Activated CD4-positive, alpha-beta memory T cell treated with anti-CD3 and anti-CD28 coated beads, Interleukin-2, amount 10 ng/mL, durations not matched to agents 7 days and 5 days (primary cell): ENCODE measurements at regions of chrX and their contacts with region 1.

Region 1: GRCh38 chrX:154002215-154002719 is 17.4 kb downstream of the IRAK1 start:
- DNase-seq: peak; percentile 68
- H3K4me3 Mint-ChIP-seq: peak overlapping the region; percentile 59
- H3K27ac Mint-ChIP-seq: peak overlapping the region; percentile 90
- H3K4me1 Mint-ChIP-seq: peaks cover 22% of the 10 kb centered on the region
- H3K27me3 Mint-ChIP-seq: no peaks in the 10 kb centered on the region

Region 2: GRCh38 chrX:153981771-153982533 is 20.3 kb before region 1 on chrX:
- CTCF ChIA-PET with region 1: interaction called, 8 read pairs
- POLR2A ChIA-PET with region 1: interaction called, 10 read pairs
- DNase-seq: peak; percentile 83
- H3K4me3 Mint-ChIP-seq: peak overlapping the region; percentile 69
- H3K27ac Mint-ChIP-seq: peak overlapping the region; percentile 93
- H3K4me1 Mint-ChIP-seq: peaks cover 57% of the 10 kb centered on the region
- H3K27me3 Mint-ChIP-seq: no peaks in the 10 kb centered on the region

Region 3: DNA sequence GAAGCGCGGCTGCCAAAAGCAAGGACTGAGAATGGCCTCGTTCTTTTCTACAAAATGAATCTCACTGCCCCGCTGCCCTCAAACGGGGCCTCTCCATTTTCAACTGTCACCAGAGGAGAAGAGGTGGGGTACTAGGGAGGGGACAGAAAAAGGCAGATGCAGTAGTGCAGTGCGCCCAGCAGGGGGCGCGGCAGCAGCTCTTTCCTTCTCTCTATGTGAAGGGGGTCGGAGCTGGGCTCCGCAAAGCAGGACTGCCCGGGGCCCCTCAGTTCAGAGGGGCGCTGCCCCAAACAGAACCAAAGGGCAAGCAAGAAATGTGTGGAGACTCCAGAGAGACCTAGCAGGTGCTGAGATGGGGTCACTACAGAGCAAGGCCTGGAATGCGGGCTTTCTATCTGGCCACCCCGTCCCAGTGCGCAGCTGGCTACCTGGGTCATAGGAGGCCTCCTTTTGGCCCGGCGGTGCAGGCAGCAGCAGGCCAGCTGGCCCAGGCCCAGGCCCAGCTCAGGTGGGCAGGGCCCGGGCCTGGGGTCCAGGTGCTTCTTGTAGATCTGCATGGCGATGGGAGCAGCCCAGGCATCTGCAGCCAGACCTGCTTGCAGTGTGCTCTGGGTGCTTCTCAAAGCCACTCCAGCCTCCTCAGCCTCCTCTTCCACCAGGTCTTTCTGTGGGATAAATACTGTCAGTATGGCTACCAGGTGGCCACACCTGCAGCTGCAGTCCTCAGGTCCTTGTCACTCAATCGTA is 11.5 kb after region 1 on chrX:
- CTCF ChIA-PET with region 1: interaction called, 11 read pairs
- POLR2A ChIA-PET with region 1: interaction called, 18 read pairs
- DNase-seq: peak; percentile 47
- H3K4me3 Mint-ChIP-seq: no peak overlapping the region
- H3K27ac Mint-ChIP-seq: peak overlapping the region; percentile 14
- H3K4me1 Mint-ChIP-seq: peaks cover 23% of the 10 kb centered on the region
- H3K27me3 Mint-ChIP-seq: no peaks in the 10 kb centered on the region